IMR-90 (cell line): ENCODE measurements at regions of chr7 and their contacts with region 1.

Region 1: GRCh38 chr7:17769918-17770317 is 170.4 kb downstream of the SNX13 start:
- DNase-seq: peak; percentile 75
- ATAC-seq: peak; percentile 77
- H3K4me3 ChIP-seq: no peak overlapping the region
- H3K27ac ChIP-seq: no peak overlapping the region
- H3K4me1 ChIP-seq: no peaks in the 10 kb centered on the region; the same call in 1 of the 2 replicates
- H3K27me3 ChIP-seq: no peaks in the 10 kb centered on the region
- CTCF ChIP-seq: peak; percentile 83
- POLR2A ChIP-seq: no peak
- RAD21 ChIP-seq: peak; percentile 89

Region 2: GRCh38 chr7:17680943-17681351 is 89.0 kb before region 1 on chr7:
- CTCF ChIA-PET with region 1: interaction called, 9 read pairs
- POLR2A ChIA-PET with region 1: no interaction called
- dilution Hi-C with region 1: no loop called
- in situ Hi-C with region 1: no loop called
- intact Hi-C with region 1: loop called (anchors 5 kb)
- DNase-seq: peak; percentile 49
- ATAC-seq: no peak
- H3K4me3 ChIP-seq: no peak overlapping the region
- H3K27ac ChIP-seq: peak overlapping the region; percentile 55; the same call in 1 of the 2 replicates
- H3K4me1 ChIP-seq: peaks cover 15% of the 10 kb centered on the region
- H3K27me3 ChIP-seq: no peaks in the 10 kb centered on the region
- CTCF ChIP-seq: peak; percentile 66
- POLR2A ChIP-seq: no peak
- RAD21 ChIP-seq: peak; percentile 67

Region 3: GRCh38 chr7:17965603-17966002 is 195.7 kb after region 1 on chr7:
- CTCF ChIA-PET with region 1: interaction called, 4 read pairs
- POLR2A ChIA-PET with region 1: no interaction called
- dilution Hi-C with region 1: no loop called
- in situ Hi-C with region 1: no loop called
- intact Hi-C with region 1: loop called (anchors 5 kb)
- DNase-seq: peak; percentile 71
- ATAC-seq: peak; percentile 82
- H3K4me3 ChIP-seq: no peak overlapping the region
- H3K27ac ChIP-seq: no peak overlapping the region
- H3K4me1 ChIP-seq: peaks cover 2% of the 10 kb centered on the region; the same call in 1 of the 2 replicates
- H3K27me3 ChIP-seq: no peaks in the 10 kb centered on the region; the same call in 1 of the 2 replicates
- CTCF ChIP-seq: no peak
- POLR2A ChIP-seq: no peak
- RAD21 ChIP-seq: no peak

Region 4: GRCh38 chr7:18320971-18321567 is 551.2 kb after region 1 on chr7:
- CTCF ChIA-PET with region 1: interaction called, 7 read pairs
- POLR2A ChIA-PET with region 1: no interaction called
- dilution Hi-C with region 1: no loop called
- in situ Hi-C with region 1: no loop called
- intact Hi-C with region 1: loop called (anchors 2 kb)
- DNase-seq: peak; percentile 58
- ATAC-seq: peak; percentile 87
- H3K4me3 ChIP-seq: no peak overlapping the region
- H3K27ac ChIP-seq: no peak overlapping the region
- H3K4me1 ChIP-seq: no peaks in the 10 kb centered on the region
- H3K27me3 ChIP-seq: 0 out of 2 replicates have a peak, but pooled peaks cover 2% of the 10 kb centered on the region
- CTCF ChIP-seq: peak; percentile 58
- POLR2A ChIP-seq: no peak
- RAD21 ChIP-seq: peak; percentile 56

Region 5: GRCh38 chr7:18564779-18565178 is 794.9 kb after region 1 on chr7:
- CTCF ChIA-PET with region 1: no interaction called
- POLR2A ChIA-PET with region 1: interaction called, 19 read pairs
- dilution Hi-C with region 1: no loop called
- in situ Hi-C with region 1: no loop called
- intact Hi-C with region 1: no loop called
- DNase-seq: no peak
- ATAC-seq: no peak
- H3K4me3 ChIP-seq: no peak overlapping the region
- H3K27ac ChIP-seq: no peak overlapping the region
- H3K4me1 ChIP-seq: no peaks in the 10 kb centered on the region
- H3K27me3 ChIP-seq: no peaks in the 10 kb centered on the region
- CTCF ChIP-seq: no peak
- POLR2A ChIP-seq: no peak
- RAD21 ChIP-seq: no peak